HCT116 (cell line): ENCODE measurements at regions of chr4 and their contacts with region 1.

Region 1: GRCh38 chr4:6177587-6178197 is 22.7 kb downstream of the JAKMIP1 start:
- DNase-seq: no peak
- ATAC-seq: peak; percentile 75
- H3K4me3 ChIP-seq: no peak overlapping the region
- H3K27ac ChIP-seq: no peak overlapping the region
- H3K4me1 ChIP-seq: peaks cover 0 to 13% of the 10 kb centered on the region in 2 experiments; a peak in 3 of 4 replicates
- H3K27me3 ChIP-seq: no peaks in the 10 kb centered on the region
- CTCF ChIP-seq: no peak
- POLR2A ChIP-seq: no peak
- RAD21 ChIP-seq: no peak

Region 2: DNA sequence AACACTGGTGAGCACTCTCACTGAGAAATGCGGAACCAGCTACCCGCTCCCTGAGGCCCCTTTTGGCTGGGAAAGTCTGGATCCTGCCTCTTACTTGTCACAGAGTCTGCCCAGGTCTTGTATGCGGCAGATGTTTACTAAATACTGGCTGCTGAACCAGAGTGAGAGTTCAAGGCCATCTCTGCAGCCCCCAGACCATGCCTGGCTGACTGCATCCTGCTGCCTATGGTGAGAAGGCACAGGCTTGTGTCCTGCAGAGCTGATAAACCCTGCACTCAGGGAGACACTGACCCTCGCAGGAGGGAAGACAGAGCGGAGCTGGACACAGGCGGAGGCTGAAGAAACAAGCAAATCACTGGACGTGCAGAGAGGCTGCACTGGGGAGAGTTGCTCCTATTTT is 23.8 kb before region 1 on chr4:
- CTCF ChIA-PET with region 1: no interaction called
- POLR2A ChIA-PET with region 1: no interaction called
- RAD21 ChIA-PET with region 1: no interaction called
- intact Hi-C with region 1: no loop called
- DNase-seq: no peak
- ATAC-seq: no peak
- H3K4me3 ChIP-seq: no peak overlapping the region
- H3K27ac ChIP-seq: no peak overlapping the region
- H3K4me1 ChIP-seq: no peaks in the 10 kb centered on the region
- H3K27me3 ChIP-seq: peaks cover 18% of the 10 kb centered on the region; the same call in 1 of the 2 replicates
- CTCF ChIP-seq: no peak
- POLR2A ChIP-seq: no peak
- RAD21 ChIP-seq: no peak

Region 3: DNA sequence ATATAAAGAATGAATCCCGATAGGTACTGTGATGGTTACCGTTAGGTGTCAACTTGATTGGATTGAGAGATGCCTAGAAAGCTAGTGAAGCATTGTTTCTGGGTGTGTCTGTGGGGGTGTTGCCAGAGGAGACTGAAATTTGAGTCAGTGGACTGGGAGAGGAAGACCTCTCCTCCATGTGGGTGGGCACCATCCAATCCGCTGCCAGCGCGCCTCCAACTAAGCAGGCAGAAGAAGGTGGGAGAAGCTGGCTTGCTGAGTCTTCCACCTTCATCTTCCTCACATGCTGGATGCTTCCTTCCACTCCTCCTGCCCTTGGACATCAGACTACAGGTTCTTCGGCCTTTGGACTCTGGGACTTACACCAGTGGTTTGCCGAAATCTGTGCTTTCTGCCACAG is 132.1 kb after region 1 on chr4:
- CTCF ChIA-PET with region 1: no interaction called
- POLR2A ChIA-PET with region 1: no interaction called
- RAD21 ChIA-PET with region 1: no interaction called
- intact Hi-C with region 1: loop called (anchors 5 kb)
- DNase-seq: no peak
- ATAC-seq: no peak
- H3K4me3 ChIP-seq: no peak overlapping the region
- H3K27ac ChIP-seq: no peak overlapping the region
- H3K4me1 ChIP-seq: no peaks in the 10 kb centered on the region
- H3K27me3 ChIP-seq: no peaks in the 10 kb centered on the region
- CTCF ChIP-seq: no peak
- POLR2A ChIP-seq: no peak
- RAD21 ChIP-seq: no peak

Region 4: GRCh38 chr4:6327041-6327917 is 149.6 kb after region 1 on chr4:
- CTCF ChIA-PET with region 1: no interaction called
- POLR2A ChIA-PET with region 1: no interaction called
- RAD21 ChIA-PET with region 1: no interaction called
- intact Hi-C with region 1: no loop called
- DNase-seq: peak; percentile 48
- ATAC-seq: peak; percentile 84
- H3K4me3 ChIP-seq: no peak overlapping the region
- H3K27ac ChIP-seq: no peak overlapping the region
- H3K4me1 ChIP-seq: peaks cover 8 to 16% of the 10 kb centered on the region in 2 experiments
- H3K27me3 ChIP-seq: no peaks in the 10 kb centered on the region
- CTCF ChIP-seq: peak; percentile 87 to 90 (median 87)
- POLR2A ChIP-seq: no peak
- RAD21 ChIP-seq: peak; percentile 96